ENCODE measurements at regions of chr5 and their contacts with region 1.

Region 1: DNA sequence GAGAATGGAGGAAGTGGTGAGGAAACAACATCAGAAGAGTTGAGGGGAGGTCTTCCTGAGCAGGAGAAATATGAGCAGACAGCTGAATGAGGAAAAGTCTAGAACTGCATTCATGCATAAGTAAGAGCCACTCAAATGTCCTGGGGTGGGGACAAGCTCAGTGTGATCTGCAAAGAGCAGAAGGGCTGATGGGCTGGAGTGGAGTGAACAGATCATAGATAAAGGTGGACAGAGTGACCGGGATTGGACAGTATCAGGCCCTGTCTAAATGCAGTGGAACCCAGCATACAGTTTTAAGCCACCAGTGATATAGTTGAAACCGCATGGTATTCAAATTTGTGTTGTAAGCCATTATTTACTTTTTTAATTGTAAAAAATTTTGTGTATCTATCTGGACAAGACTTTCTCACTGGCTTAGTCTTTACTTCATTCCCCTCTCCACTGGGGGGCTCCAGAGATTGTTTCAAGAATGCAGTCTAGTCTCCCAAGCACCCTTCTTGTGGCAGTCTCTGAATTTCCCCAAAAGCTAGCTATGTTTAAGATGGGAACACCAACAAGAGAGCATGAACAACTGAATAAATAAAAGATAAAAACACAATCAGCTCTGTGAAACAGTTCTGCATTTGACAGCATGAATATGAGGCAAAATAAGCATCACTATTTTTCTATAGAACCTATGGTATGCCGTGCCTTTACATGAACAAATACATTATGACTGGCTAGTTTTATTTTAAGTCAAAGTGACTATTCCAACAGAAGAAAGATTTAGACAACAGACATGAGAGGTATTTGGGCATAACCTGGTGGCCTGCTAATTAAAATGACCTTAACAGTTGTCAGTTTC is 10.7 kb upstream of the STK32A start:
- DNase-seq: no peak
- ATAC-seq: peak; percentile 85
- H3K4me3 ChIP-seq: no peak overlapping the region
- H3K27ac ChIP-seq: no peak overlapping the region
- H3K4me1 ChIP-seq: no peaks in the 10 kb centered on the region
- H3K27me3 ChIP-seq: no peaks in the 10 kb centered on the region
- CTCF ChIP-seq: peak; percentile 75

Region 2: DNA sequence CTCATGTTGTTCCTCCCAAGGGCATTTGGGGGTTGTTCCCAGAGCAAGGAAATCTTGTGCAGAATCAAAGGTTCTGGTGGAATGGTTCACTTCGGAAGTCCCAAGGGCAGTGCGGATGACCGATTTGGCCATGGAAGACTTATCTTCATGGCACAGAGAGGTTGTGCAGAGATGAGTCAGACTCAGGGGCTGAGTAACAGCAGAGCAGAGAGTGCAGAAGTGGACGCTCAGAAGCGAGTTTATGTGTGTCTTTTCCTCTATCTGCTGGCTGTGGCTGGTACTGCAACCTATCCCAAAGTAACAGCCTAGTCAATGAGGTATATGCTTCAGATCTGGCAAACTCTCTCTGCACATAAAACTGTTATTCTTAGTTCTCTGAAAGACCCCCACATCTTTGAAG is 167.6 kb after region 1 on chr5:
- intact Hi-C with region 1: no loop called
- DNase-seq: no peak
- ATAC-seq: peak; percentile 73
- H3K4me3 ChIP-seq: no peak overlapping the region
- H3K27ac ChIP-seq: no peak overlapping the region
- H3K4me1 ChIP-seq: peaks cover 4% of the 10 kb centered on the region
- H3K27me3 ChIP-seq: no peaks in the 10 kb centered on the region
- CTCF ChIP-seq: peak; percentile 43

Region 3: DNA sequence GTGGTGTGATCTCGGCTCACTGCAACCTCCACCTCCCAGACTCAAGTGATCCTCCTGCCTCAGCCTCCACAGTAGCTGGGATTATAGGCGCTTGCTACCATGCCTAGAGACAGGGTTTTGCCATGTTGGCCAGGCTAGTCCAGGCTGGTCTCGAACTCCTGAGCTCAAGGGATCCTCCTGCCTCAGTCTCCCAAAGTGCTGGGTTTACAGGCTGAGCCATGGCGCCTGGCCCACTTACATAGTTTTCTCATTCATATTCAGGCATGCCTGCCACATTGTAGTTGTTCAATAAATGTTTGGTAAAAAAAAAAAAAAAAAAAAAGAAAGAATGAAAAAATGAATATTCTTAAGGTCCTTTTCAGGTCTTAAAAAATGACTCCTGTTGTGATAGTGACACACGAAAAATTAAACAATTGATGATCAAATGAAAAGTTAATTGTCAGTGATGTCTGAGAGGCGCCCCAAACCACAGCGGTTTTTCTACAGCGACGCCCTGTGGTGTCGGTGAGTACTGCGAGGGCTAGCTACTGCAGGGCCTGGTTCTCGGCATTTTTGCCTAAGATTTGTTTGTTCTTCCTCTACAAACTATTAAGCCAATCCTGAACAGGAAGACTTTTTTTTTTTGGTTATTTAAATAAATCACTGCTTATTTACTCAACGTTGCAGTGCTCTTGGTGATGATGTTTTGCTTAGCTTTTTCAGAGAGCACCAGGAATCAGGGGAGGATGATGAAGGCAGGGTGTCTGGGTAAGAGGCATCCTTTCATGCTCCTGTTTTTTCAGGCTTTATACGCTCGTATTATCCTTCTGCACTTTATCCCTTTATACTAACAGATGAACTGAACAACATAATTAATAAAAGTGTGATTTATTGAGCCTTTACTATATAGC is 352.7 kb after region 1 on chr5:
- intact Hi-C with region 1: loop called (anchors 10 kb)
- DNase-seq: peak; percentile 73
- ATAC-seq: peak; percentile 89
- H3K4me3 ChIP-seq: no peak overlapping the region
- H3K27ac ChIP-seq: no peak overlapping the region
- H3K4me1 ChIP-seq: no peaks in the 10 kb centered on the region
- H3K27me3 ChIP-seq: no peaks in the 10 kb centered on the region
- CTCF ChIP-seq: peak; percentile 90

Measured in upper lobe of right lung (tissue), 1 donor.